PC-3 (cell line): ENCODE measurements at regions of chr7 and their contacts with region 1.

Region 1: GRCh38 chr7:44797329-44798251 is 1.1 kb downstream of the PPIA start:
- DNase-seq: peak; percentile 83
- ATAC-seq: peak; percentile 52
- H3K4me3 ChIP-seq: peak overlapping the region; percentile 92
- H3K27ac ChIP-seq: peak overlapping the region; percentile 95
- H3K4me1 ChIP-seq: peaks cover 16% of the 10 kb centered on the region
- H3K27me3 ChIP-seq: no peaks in the 10 kb centered on the region
- CTCF ChIP-seq: peak; percentile 55

Region 2: GRCh38 chr7:44633254-44634186 is 164.1 kb before region 1 on chr7:
- CTCF ChIA-PET with region 1: no interaction called
- POLR2A ChIA-PET with region 1: no interaction called
- intact Hi-C with region 1: loop called (anchors 5 kb)
- DNase-seq: peak; percentile 96
- ATAC-seq: peak; percentile 75
- H3K4me3 ChIP-seq: no peak overlapping the region
- H3K27ac ChIP-seq: peak overlapping the region; percentile 98
- H3K4me1 ChIP-seq: peaks cover 58% of the 10 kb centered on the region
- H3K27me3 ChIP-seq: no peaks in the 10 kb centered on the region
- CTCF ChIP-seq: no peak

Region 3: DNA sequence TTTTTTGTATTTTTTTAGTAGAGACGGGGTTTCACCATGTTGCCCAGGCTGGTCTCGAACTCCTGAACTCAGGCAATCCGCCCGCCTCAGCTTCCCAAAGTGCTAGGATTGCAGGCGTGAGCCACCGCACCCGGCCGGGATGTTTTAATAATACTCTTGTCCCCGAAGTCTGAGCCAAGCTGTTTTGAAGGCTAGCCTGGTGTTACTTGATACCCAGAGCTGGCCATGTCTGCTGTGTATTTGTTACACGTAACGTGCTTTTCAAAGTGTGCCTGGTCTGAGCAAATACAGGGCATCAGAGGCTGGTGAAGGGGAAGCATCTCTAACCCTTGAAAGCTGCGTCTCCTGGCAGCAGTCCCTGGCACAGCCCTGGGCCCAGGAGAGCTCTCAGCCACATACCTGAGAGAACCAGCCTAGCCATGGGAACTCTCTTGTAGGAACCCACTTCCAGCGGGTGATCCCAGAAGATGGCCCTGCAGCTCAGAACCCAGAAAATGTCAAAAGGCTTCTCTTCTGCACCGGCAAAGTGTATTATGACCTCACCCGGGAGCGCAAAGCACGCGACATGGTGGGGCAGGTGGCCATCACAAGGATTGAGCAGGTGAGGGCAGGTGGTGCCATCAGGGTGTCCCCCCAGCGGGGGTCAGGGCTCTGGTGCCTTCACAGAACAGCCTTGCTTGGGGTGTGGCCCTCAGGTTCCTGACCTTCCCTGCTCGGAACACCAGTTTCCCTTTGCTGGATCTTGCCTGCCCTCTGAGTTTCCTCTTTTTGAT is 90.6 kb before region 1 on chr7:
- CTCF ChIA-PET with region 1: no interaction called
- POLR2A ChIA-PET with region 1: no interaction called
- intact Hi-C with region 1: no loop called
- DNase-seq: no peak
- ATAC-seq: no peak
- H3K4me3 ChIP-seq: no peak overlapping the region
- H3K27ac ChIP-seq: no peak overlapping the region
- H3K4me1 ChIP-seq: peaks cover 7% of the 10 kb centered on the region
- H3K27me3 ChIP-seq: no peaks in the 10 kb centered on the region
- CTCF ChIP-seq: no peak

Region 4: DNA sequence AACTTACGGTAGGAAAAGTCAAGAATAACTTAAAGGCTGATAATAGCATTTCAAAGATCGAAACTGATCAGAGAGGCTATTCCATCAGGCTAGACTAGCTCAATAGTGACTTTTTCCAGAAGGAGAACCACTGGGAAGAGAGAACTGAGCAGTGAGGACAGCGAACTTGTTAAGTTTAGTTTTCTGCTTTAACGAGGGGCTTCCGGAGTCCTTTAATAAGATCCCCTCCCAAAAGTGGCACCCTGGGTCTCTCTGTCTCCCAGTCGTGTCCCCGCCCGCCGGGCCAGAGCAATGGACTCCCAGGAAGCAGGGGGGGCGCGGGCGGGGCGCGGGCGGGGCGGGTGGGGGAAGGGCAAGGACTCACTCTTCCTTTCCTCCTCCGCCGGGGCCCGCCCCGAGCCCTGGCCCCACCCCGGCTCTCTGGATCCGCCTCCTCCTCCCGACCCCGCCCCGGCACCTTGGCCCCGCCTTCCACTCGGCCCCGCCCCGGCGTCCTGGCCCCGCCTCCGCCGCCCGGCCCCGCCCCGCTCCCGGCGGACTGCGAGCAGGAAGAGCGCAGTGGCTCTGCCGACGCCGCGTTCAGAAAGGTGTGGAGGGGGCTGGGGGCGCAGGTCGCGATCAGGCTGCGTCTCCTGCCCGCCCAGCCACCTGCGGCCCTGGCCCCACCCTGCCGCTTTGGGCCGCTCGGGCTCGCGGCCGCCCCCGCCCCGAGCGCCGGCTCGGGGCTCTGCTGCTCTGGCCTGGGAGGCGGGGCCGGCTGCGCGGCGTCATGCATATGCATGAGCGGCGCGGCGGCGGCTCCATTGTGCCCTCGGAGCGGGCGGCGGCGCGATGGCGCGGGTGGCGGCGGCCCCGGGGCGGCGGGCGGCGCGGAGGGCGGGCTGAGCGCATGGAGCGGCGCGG is 49.3 kb before region 1 on chr7 and contains the start of gene ZMIZ2:
- CTCF ChIA-PET with region 1: no interaction called
- POLR2A ChIA-PET with region 1: interaction called, 7 read pairs
- intact Hi-C with region 1: loop called (anchors 5 kb)
- DNase-seq: peak; percentile 84
- ATAC-seq: peak; percentile 85
- H3K4me3 ChIP-seq: peak within 1 kb of the TSS; percentile 85
- H3K27ac ChIP-seq: peak within 1 kb of the TSS; percentile 77
- H3K4me1 ChIP-seq: peaks cover 24% of the 10 kb centered on the region
- H3K27me3 ChIP-seq: no peaks in the 10 kb centered on the region
- CTCF ChIP-seq: no peak
- total RNA-seq, gene ZMIZ2: 18.3 and 26.6 TPM in 2 replicates

Region 5: DNA sequence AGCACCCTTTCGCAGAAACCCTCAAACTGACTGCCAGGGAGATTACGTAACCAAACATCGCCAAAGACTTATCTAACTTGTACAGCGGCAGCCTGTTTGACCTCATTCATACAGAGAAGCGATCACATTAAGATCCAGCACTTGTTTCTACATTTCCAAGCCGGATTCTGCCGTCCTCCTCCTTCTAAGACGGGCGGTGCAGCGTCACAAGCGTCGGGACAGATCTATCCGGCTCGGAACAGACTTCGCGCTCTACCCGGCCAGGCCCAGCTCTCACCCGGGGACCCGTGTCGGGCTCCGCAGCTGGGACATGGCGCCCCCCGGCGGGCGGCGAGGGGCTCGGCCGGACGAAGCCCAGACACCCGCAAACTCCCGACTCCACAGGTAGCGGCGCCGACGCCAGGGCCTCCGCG is 49.9 kb after region 1 on chr7:
- CTCF ChIA-PET with region 1: no interaction called
- POLR2A ChIA-PET with region 1: no interaction called
- intact Hi-C with region 1: loop called (anchors 1 kb)
- DNase-seq: peak; percentile 75
- ATAC-seq: peak; percentile 72
- H3K4me3 ChIP-seq: peak overlapping the region; percentile 77
- H3K27ac ChIP-seq: peak overlapping the region; percentile 45
- H3K4me1 ChIP-seq: peaks cover 11% of the 10 kb centered on the region
- H3K27me3 ChIP-seq: no peaks in the 10 kb centered on the region
- CTCF ChIP-seq: peak; percentile 77

Region 6: DNA sequence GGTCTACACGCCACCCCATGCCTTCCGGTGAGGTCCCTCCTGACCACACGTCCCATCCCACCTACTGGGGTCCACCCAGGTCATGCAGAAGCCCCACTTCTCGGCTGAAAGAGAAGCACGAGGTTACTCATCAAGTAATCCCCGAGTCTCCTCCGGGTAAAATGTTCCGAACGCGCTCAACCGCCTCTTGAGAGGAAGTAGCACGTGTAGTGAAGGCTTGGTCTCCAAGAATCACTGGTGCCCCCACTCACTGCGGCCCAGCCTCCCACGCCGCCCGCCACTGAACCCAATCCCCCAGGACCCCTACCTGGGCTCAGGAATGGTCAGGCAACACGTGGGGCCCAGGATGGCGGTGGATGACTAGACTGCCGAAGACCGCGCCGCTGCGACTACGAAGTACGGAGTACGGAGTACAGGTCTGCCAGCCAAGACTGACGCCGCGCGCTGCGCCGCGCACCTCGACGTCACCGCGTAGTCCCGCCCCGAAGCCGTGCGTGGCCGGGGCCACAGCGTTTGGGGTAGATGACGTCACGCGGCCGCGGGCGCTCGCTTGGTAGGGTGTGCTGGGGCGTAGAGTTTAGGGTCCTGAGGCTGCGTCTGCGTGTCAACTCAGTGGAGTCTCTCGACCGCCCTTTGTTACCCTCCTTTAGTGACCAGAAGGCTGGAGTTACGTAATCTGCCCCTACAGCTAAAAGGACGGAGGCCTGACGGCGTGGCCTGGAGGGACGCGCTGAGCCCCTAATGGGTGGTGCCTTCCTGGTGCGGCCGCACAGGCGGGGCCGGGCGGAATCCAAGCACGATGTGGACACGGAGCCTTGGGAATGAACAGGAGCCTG is 188.8 kb after region 1 on chr7:
- CTCF ChIA-PET with region 1: no interaction called
- POLR2A ChIA-PET with region 1: no interaction called
- intact Hi-C with region 1: no loop called
- DNase-seq: peak; percentile 94
- ATAC-seq: peak; percentile 98
- H3K4me3 ChIP-seq: peak overlapping the region; percentile 92
- H3K27ac ChIP-seq: peak overlapping the region; percentile 69
- H3K4me1 ChIP-seq: peaks cover 19% of the 10 kb centered on the region
- H3K27me3 ChIP-seq: no peaks in the 10 kb centered on the region
- CTCF ChIP-seq: no peak